Posterior cingulate gyrus (tissue), 11 donors: ENCODE measurements at regions of chr17 and their contacts with region 1.

Region 1: GRCh38 chr17:8248751-8249607 is at the start of gene PFAS:
- DNase-seq: peak; percentile 91 to 99 (median 94)

Region 2: GRCh38 chr17:8222630-8223356 is 26.2 kb before region 1 on chr17:
- intact Hi-C with region 1: loop called (anchors 2 kb)
- DNase-seq: peak; percentile 88 to 99 (median 93)

Region 3: GRCh38 chr17:8294814-8295316 is 45.9 kb after region 1 on chr17:
- intact Hi-C with region 1: loop called (anchors 2 kb)
- DNase-seq: no peak

Region 4: DNA sequence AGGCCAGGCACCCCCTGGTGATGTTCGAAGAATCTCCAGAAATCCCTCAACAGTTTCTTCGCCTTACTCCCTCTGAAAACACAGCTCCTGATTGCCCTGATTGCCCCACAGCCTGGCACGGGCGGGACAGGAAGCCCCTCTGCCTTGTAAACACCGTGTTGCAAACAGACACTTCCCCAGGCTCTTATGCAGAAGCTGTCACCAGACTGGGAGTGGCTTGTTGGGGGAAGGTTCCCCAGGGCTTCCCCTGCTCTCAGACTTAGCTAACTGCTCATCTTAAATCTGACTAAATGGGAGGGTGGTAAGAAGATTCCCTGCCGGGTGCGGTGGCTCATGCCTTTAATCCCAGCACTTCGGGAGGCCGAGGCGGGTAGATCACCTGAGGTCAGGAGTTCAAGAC is 705.4 kb after region 1 on chr17:
- intact Hi-C with region 1: no loop called
- DNase-seq: peak in 4 of 10 donors; percentile 17 to 86 (median 37)